Thyroid gland (tissue), 4 donors: ENCODE measurements at regions of chr11 and their contacts with region 1.

Region 1: DNA sequence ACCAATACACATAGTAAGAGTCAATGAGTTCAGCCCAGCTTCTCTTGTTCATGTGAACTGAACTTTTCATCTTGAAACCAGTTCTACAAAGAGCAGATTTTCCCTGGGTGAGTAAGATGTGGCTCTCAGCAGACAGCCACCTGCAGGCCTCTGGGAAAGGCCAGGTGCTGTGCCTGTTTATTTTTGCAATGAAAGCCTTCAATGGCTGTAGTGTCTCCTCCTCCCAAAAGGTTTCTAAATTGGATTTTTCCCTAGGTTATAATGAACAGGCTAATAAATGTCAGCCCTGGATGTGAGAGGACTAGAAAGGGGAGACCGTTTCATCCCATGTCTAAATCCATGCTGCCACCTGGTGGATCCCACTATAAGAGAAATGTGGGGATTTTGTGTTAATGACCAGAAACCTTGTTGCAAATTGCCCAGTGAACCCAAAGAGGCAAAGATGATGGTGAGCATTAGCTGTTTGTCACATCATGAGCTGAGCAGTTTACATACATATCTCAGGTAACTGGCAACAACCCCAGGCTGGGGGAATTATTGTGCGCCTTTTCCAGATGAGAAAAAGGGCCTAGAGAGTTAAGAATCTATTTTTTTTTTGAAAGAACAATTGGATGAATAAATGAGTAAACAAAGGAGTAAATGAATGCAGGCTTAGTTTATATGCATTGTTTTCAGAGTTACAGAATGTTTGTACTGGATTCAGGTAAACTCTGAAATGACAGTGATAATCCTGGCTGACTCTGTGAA is 12.7 kb downstream of the C11orf91 start:
- DNase-seq: peak; percentile 62 to 68
- H3K4me3 ChIP-seq: no peak overlapping the region
- H3K27ac ChIP-seq: no peak overlapping the region
- H3K4me1 ChIP-seq: peaks cover 20 to 33% of the 10 kb centered on the region in 2 donors
- H3K27me3 ChIP-seq: no peaks in the 10 kb centered on the region
- CTCF ChIP-seq: peak; percentile 50 to 92 (median 80)
- POLR2A ChIP-seq: no peak

Region 2: DNA sequence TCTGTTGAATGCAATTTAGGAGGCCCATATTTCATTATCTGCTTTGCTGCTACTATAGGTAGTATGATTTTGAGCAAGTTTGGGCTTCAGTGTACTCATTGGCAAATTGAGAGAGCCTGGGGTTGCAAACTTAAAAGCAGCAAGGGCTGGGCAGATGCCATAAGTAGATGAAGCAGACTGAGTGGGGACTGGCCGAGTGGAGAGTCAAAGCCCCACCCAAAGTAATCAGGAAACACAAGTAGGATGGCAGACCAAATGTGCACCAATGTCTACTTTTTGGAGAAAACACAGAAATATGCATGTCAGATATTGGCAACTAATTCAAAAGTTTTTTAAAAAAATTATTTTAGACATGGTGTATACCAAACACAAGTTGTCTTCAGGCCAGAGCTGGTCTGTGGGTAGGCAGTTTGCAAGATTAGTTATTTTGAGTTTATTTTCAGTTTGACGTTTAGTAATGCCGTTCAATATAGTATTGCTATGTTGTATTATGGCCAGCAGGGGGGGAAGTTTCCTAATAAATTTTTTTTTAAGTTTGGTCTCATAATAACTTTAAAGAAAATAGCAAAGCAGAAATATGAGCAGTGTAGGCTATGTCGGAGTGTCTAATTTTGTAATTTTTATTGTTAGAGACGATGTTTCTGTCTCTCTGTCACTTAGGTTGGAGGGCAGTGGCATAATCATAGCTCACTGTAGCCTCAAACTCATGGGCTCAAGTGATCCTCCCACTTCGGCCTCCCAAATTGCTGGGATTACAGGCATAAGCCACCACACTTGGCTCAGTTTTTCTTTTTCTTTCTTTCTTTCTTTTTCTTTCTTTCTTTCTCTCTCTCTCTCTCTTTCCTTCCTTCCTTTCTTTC is 325.6 kb before region 1 on chr11:
- intact Hi-C with region 1: loop called (anchors 5 kb)
- DNase-seq: no peak
- H3K4me3 ChIP-seq: no peak overlapping the region
- H3K27ac ChIP-seq: no peak overlapping the region
- H3K4me1 ChIP-seq: peaks cover 0 to 10% of the 10 kb centered on the region in 2 donors
- H3K27me3 ChIP-seq: no peaks in the 10 kb centered on the region
- CTCF ChIP-seq: peak in 5 of 6 experiments; percentile 20 to 68 (median 60)
- POLR2A ChIP-seq: no peak

Region 3: GRCh38 chr11:33545931-33546330 is 142.0 kb before region 1 on chr11:
- intact Hi-C with region 1: loop called (anchors 2 kb)
- DNase-seq: no peak
- H3K4me3 ChIP-seq: no peak overlapping the region
- H3K27ac ChIP-seq: no peak overlapping the region
- H3K4me1 ChIP-seq: no peaks in the 10 kb centered on the region
- H3K27me3 ChIP-seq: no peaks in the 10 kb centered on the region
- CTCF ChIP-seq: no peak
- POLR2A ChIP-seq: no peak